ENCODE measurements at regions of chr2 and their contacts with region 1.

Region 1: GRCh38 chr2:110812726-110813645 is 80.6 kb downstream of the ACOXL start:
- DNase-seq: peak; percentile 53
- H3K4me3 Mint-ChIP-seq: no peak overlapping the region
- H3K27ac Mint-ChIP-seq: no peak overlapping the region
- H3K4me1 Mint-ChIP-seq: peaks cover 19% of the 10 kb centered on the region
- H3K27me3 Mint-ChIP-seq: peaks cover 31% of the 10 kb centered on the region

Region 2: GRCh38 chr2:110873056-110873502 is 60.1 kb after region 1 on chr2:
- intact Hi-C with region 1: loop called (anchors 2 kb)
- DNase-seq: peak; percentile 57
- H3K4me3 Mint-ChIP-seq: no peak overlapping the region
- H3K27ac Mint-ChIP-seq: peak overlapping the region; percentile 73
- H3K4me1 Mint-ChIP-seq: peaks cover 51% of the 10 kb centered on the region
- H3K27me3 Mint-ChIP-seq: peaks cover 23% of the 10 kb centered on the region

Region 3: GRCh38 chr2:111049792-111050640 is 237.0 kb after region 1 on chr2:
- intact Hi-C with region 1: loop called (anchors 5 kb)
- DNase-seq: peak; percentile 63
- H3K4me3 Mint-ChIP-seq: peak overlapping the region; percentile 56
- H3K27ac Mint-ChIP-seq: peak overlapping the region; percentile 90
- H3K4me1 Mint-ChIP-seq: peaks cover 33% of the 10 kb centered on the region
- H3K27me3 Mint-ChIP-seq: peaks cover 43% of the 10 kb centered on the region

Measured in activated CD4-positive, alpha-beta T cell treated with anti-CD3 and anti-CD28 coated beads, Interleukin-2, amount 10 ng/mL, durations not matched to agents 24 days and 14 days (primary cell).